Mucosa of descending colon (tissue), 3 donors: ENCODE measurements at regions of chr14 and their contacts with region 1.

Region 1: GRCh38 chr14:67943947-67944346 is 124.4 kb downstream of the RAD51B start:
- DNase-seq: peak in 1 of 3 donors; percentile 95
- ATAC-seq: peak; percentile 87
- H3K4me3 ChIP-seq: no peak overlapping the region
- H3K4me1 ChIP-seq: peaks cover 16% of the 10 kb centered on the region
- CTCF ChIP-seq: no peak

Region 2: GRCh38 chr14:68140111-68140741 is 196.3 kb after region 1 on chr14:
- intact Hi-C with region 1: loop called in 1 of 2 experiments (anchors 10 kb)
- DNase-seq: peak in 1 of 3 donors; percentile 62
- ATAC-seq: peak; percentile 80
- H3K4me3 ChIP-seq: no peak overlapping the region
- H3K4me1 ChIP-seq: peaks cover 28% of the 10 kb centered on the region
- CTCF ChIP-seq: no peak

Region 3: GRCh38 chr14:68377459-68377858 is 433.5 kb after region 1 on chr14:
- intact Hi-C with region 1: no loop called
- DNase-seq: peak; percentile 67 to 83 (median 69)
- ATAC-seq: peak; percentile 73
- H3K4me3 ChIP-seq: no peak overlapping the region
- H3K4me1 ChIP-seq: peaks cover 14% of the 10 kb centered on the region
- CTCF ChIP-seq: no peak

Region 4: DNA sequence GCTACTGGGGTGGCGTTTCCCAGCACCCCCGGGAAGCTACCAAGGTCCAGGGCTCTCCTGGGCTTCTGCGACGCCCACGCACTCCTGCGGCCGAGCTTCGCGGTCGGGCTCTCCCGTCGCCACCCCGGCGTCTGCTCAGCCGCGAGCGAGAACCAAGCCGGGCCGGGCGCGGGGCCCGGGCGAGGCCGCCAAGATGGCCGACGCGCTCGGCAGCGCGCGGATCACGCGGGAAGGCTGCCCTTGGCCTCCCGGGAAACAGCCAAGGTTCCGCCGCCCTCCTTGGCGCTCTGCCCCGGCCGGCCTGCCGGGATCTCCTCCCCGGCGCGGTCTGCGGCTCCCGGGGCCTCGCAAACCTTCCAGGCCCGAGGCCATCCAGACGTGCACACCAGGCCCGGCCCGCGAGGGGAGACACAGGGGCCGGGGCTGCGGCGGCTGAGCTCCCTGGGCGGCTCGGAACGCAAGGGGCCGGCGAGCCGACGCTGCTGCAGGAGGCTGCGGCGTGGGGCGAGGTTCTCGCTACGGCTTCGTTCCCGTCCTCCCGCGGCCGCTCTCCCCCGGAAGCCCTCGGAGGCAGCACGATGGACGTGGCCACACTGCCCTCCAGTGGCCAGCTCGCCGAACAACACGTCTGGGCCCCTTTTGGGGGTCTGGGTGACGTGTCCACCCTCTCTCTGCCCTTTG is 872.5 kb after region 1 on chr14:
- intact Hi-C with region 1: loop called (anchors 5 to 10 kb)
- DNase-seq: peak; percentile 89 to 95 (median 92)
- ATAC-seq: peak; percentile 92
- H3K4me3 ChIP-seq: peak overlapping the region; percentile 26
- H3K4me1 ChIP-seq: peaks cover 49% of the 10 kb centered on the region
- CTCF ChIP-seq: peak; percentile 98